IMR-90 (cell line): ENCODE measurements at regions of chr5 and their contacts with region 1.

Region 1: DNA sequence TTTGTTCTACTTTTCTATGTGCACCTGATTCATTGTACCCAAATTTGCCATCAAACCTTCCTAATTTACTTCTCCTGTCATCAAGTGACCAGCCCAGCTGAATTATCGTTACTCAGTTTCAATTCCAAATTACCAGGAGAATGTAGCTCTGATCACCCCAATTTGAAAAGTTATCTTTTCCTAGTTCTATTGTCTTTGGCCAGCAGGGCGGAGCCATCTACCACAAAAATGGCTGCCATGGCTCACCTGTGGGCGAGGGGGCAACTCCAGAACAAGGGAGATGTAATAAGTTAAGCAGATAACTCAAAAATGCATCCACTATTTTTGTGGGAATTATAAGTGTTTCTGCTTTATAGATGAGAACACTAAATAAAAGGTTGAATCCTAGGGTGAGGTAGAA is 133.8 kb upstream of the MOCS2 start:
- DNase-seq: no peak
- ATAC-seq: no peak
- H3K4me3 ChIP-seq: no peak overlapping the region
- H3K27ac ChIP-seq: no peak overlapping the region
- H3K4me1 ChIP-seq: peaks cover 9% of the 10 kb centered on the region
- H3K27me3 ChIP-seq: no peaks in the 10 kb centered on the region
- CTCF ChIP-seq: no peak
- POLR2A ChIP-seq: no peak
- RAD21 ChIP-seq: no peak

Region 2: DNA sequence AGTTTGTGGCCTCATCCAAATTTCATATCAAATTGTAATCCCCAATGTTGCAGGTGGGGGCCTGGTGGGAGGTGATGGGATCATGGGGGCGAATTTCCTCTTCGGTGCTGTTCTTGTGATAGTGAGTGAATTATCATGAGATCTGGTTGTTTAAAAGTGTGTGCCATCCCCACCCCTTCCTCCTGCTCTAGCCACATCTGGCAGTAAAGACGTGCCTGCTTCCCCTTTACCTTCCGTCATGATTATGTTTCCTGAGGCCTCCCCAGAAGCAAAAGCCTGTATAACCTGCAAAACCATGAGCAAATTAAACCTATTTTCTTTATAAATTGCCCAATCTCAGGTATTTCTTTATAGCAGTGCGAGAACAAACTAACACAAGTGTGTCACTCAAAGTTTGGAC is 62.9 kb before region 1 on chr5:
- CTCF ChIA-PET with region 1: no interaction called
- POLR2A ChIA-PET with region 1: no interaction called
- dilution Hi-C with region 1: no loop called
- in situ Hi-C with region 1: loop called (anchors 5 kb)
- intact Hi-C with region 1: no loop called
- DNase-seq: no peak
- ATAC-seq: no peak
- H3K4me3 ChIP-seq: no peak overlapping the region
- H3K27ac ChIP-seq: no peak overlapping the region
- H3K4me1 ChIP-seq: no peaks in the 10 kb centered on the region; the same call in 1 of the 2 replicates
- H3K27me3 ChIP-seq: no peaks in the 10 kb centered on the region
- CTCF ChIP-seq: no peak
- POLR2A ChIP-seq: no peak
- RAD21 ChIP-seq: no peak

Region 3: DNA sequence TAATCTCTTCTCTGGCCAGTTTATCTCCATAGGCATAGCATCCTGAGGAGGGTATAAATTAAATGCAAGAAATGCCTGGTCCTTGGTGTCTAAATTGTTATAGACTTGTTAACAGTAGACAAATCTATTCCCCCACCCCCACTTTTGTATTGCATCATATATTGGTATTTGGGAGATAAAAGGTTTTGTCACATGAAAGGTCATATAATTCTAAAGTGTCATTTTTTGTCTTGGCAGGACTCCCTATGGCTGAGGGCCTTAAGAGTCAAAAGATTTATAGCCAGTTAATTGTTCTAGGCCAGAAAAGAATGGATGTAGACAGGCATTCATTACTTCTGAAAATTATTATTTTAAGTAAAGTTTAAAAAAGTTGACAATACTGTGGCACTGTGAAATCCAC is 43.5 kb before region 1 on chr5:
- CTCF ChIA-PET with region 1: no interaction called
- POLR2A ChIA-PET with region 1: no interaction called
- dilution Hi-C with region 1: no loop called
- in situ Hi-C with region 1: no loop called
- intact Hi-C with region 1: loop called (anchors 5 kb)
- DNase-seq: no peak
- ATAC-seq: no peak
- H3K4me3 ChIP-seq: no peak overlapping the region
- H3K27ac ChIP-seq: no peak overlapping the region
- H3K4me1 ChIP-seq: no peaks in the 10 kb centered on the region
- H3K27me3 ChIP-seq: no peaks in the 10 kb centered on the region
- CTCF ChIP-seq: no peak
- POLR2A ChIP-seq: no peak
- RAD21 ChIP-seq: no peak